PC-3 (cell line): ENCODE measurements at regions of chr6 and their contacts with region 1.

Region 1: GRCh38 chr6:128389820-128390534 is 130.4 kb downstream of the PTPRK start:
- DNase-seq: no peak
- ATAC-seq: no peak
- H3K4me3 ChIP-seq: no peak overlapping the region
- H3K27ac ChIP-seq: no peak overlapping the region
- H3K4me1 ChIP-seq: no peaks in the 10 kb centered on the region
- H3K27me3 ChIP-seq: no peaks in the 10 kb centered on the region
- CTCF ChIP-seq: no peak

Region 2: DNA sequence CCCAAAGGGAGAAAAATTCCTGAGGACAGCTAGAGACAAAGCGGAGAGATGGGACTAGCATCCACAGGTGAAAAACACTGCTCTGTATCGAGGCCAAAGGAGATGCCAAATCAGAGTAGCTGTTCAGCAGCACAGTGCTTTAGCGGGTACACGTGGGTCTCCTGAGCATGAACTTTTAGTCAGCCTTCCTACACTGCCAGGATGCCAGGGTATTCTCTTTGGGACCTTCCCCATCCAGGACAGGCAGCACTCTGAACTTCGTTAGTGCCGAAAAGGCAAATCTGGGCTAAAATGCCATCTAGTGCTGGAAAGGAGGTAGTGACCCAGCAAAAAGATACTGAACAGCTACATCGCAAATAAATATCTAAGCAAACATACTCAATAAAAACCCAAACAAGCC is 748.1 kb before region 1 on chr6:
- CTCF ChIA-PET with region 1: no interaction called
- POLR2A ChIA-PET with region 1: no interaction called
- intact Hi-C with region 1: no loop called
- DNase-seq: peak; percentile 64
- ATAC-seq: peak; percentile 70
- H3K4me3 ChIP-seq: no peak overlapping the region
- H3K27ac ChIP-seq: no peak overlapping the region
- H3K4me1 ChIP-seq: no peaks in the 10 kb centered on the region
- H3K27me3 ChIP-seq: no peaks in the 10 kb centered on the region
- CTCF ChIP-seq: peak; percentile 62

Region 3: GRCh38 chr6:128400875-128401274 is 10.9 kb after region 1 on chr6:
- CTCF ChIA-PET with region 1: no interaction called
- POLR2A ChIA-PET with region 1: no interaction called
- intact Hi-C with region 1: loop called (anchors 1 kb)
- DNase-seq: no peak
- ATAC-seq: no peak
- H3K4me3 ChIP-seq: no peak overlapping the region
- H3K27ac ChIP-seq: no peak overlapping the region
- H3K4me1 ChIP-seq: peaks cover 10% of the 10 kb centered on the region
- H3K27me3 ChIP-seq: no peaks in the 10 kb centered on the region
- CTCF ChIP-seq: no peak